Motor neuron (in vitro differentiated cells): ENCODE measurements at regions of chr2 and their contacts with region 1.

Region 1: DNA sequence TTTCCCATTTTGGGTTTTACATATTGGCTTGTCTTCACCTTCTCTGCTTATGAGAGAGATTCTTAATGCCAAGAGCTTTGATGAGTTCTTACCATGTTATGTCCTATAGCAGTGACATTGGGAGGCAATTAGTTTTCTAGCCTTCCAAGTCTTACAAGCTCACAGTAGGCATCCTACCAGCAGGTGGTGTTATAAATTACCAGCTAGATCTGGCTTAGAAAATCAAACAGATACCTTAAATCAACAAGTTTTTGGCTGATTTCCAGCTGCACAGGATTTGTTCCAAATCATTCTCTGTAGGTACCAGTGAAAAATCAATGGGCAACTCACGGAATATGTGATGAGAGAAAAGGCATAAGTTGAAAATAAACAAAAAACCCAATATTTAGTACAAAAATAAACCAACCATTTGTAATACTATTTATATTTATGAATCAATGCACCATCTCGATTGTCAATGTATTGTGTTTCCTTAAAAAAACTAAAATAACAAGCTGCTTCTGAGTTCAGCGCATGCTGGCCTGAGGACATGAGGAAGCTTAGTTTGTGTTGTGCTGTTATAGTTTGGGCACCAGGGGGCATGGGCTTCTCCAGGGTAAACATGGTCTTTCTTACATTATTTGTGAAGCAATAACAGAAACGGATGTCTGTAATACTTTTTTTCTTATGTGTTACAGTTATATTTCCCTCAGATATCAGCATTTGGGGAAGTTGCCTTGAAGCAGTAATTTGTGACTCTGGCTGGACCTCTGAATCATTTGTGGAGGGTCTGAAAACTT is 34.1 kb upstream of the NXPH2 start:
- ATAC-seq: peak in 1 of 8 experiments; percentile 56
- H3K4me3 ChIP-seq: no peak overlapping the region
- H3K27ac ChIP-seq: no peak overlapping the region
- H3K4me1 ChIP-seq: no peaks in the 10 kb centered on the region

Region 2: DNA sequence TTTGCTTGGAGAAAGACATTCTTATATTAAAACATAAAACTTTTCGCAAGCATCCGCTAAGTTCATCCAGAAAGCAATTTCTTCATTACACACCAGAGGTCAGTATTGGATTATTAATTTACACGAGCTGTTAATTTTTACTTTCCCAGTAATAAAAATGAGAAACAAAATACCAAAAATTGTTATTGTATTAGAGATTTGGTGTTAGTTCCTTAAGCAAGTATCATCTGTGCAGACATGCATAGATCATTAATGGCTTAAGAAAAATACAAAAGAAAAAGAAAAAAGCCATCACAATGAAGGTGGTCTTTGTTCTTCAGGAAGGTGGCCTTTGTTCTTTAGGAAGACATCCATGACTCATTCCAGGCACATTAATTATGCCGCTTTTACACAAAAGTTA is 903.7 kb before region 1 on chr2:
- in situ Hi-C with region 1: loop called in 2 of 9 experiments (anchors 25 kb)
- ATAC-seq: peak in 3 of 8 experiments; percentile 21 to 45 (median 32)
- H3K4me3 ChIP-seq: no peak overlapping the region
- H3K27ac ChIP-seq: no peak overlapping the region
- H3K4me1 ChIP-seq: peaks cover 0 to 3% of the 10 kb centered on the region in 2 donors